Activated T-helper 1 cell treated with anti-CD3 and anti-CD28 coated beads, Interleukin-12 subunit alpha, Interleukin-12 subunit beta, Interleukin-2, Interleukin-4 antibody, amounts not matched to agents 30 ng/mL and 10 ng/mL and 1 ng/mL, durations not matched to agents 14 hours and 24 hours and 36 hours (primary cell): ENCODE measurements at regions of chrX and their contacts with region 1.

Region 1: DNA sequence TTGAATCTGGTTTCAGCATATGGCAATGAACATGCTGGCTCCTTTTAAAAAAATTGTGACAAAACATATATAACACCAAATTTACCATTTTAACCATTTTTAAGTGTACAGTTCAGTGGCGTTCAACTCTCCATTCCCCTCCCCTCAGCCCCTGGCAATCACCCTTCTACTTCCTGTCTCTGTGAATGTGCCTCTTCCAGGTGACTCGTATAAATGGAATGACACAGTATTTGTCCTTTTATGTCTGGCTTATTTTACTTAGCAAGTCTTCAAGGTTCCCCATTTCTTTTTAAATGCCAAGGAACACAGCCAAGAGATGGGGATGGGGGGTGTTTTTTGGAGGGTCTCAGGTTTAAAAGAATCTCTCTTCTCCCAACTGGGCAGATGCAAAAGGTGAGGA is 35.4 kb upstream of the BCLAF3 start:
- DNase-seq: no peak
- H3K4me3 Mint-ChIP-seq: no peak overlapping the region
- H3K27ac Mint-ChIP-seq: no peak overlapping the region
- H3K4me1 Mint-ChIP-seq: no peaks in the 10 kb centered on the region
- H3K27me3 Mint-ChIP-seq: no peaks in the 10 kb centered on the region

Region 2: GRCh38 chrX:20042221-20042620 is 15.9 kb after region 1 on chrX:
- intact Hi-C with region 1: loop called (anchors 1 kb)
- DNase-seq: no peak
- H3K4me3 Mint-ChIP-seq: no peak overlapping the region
- H3K27ac Mint-ChIP-seq: no peak overlapping the region
- H3K4me1 Mint-ChIP-seq: no peaks in the 10 kb centered on the region
- H3K27me3 Mint-ChIP-seq: peaks cover 1% of the 10 kb centered on the region